ENCODE measurements at regions of chr5 and their contacts with region 1.

Region 1: GRCh38 chr5:43602461-43603343 is at the start of gene NNT:
- DNase-seq: peak; percentile 73 to 86 (median 76)
- H3K4me3 ChIP-seq: peak within 1 kb of the TSS; percentile 97
- H3K4me3 Mint-ChIP-seq: peak within 1 kb of the TSS; percentile 90 to 98 (median 91)
- H3K27ac ChIP-seq: peak within 1 kb of the TSS; percentile 87
- H3K27ac Mint-ChIP-seq: peak within 1 kb of the TSS; percentile 89 to 99 (median 94)
- H3K4me1 ChIP-seq: peaks cover 32% of the 10 kb centered on the region
- H3K4me1 Mint-ChIP-seq: peaks cover 54 to 68% (median 59%) of the 10 kb centered on the region in 3 donors
- H3K27me3 ChIP-seq: no peaks in the 10 kb centered on the region
- H3K27me3 Mint-ChIP-seq: peaks cover 0 to 2% of the 10 kb centered on the region in 2 donors
- total RNA-seq, gene NNT: 79.7 to 87.3 TPM

Region 2: DNA sequence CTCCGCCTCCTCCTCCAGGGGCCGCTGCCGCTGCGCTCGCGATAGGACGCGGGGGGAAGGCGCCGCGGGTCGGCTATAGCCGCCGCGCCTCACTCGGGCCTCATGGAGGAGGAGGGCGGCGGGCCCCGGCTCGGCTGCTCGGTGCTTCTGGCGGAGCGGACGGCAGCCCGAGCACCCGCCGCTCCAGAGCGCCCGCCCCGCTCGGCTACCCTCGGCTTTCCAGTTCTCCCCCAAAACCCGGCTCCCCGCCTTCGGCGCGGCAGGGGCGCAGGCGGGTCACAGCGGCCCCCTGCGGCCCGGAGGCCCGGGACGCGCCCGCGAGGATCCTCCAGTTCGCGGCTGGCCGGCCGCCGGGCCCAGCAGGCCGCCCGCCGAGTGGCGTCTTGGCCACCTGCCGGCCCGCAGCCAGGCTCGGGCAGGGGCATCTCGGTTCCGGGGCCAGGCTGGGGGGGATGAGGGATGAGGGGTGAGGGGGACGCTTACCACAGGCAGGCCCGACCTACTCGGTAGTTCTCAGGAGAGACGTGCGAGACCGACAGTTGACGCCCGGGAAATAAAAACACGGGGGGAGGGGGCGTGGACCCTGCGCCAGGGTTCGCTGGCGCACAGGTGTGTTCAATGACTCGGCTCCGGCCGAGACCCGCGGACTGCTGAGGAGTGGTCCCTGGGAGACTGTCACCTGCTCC is 45.7 kb before region 1 on chr5 and contains the start of gene PAIP1:
- CTCF ChIA-PET with region 1: interaction called, 10 read pairs
- POLR2A ChIA-PET with region 1: interaction called, 9 read pairs
- DNase-seq: peak; percentile 73 to 90 (median 86)
- H3K4me3 ChIP-seq: peak within 1 kb of the TSS; percentile 63
- H3K4me3 Mint-ChIP-seq: peak within 1 kb of the TSS; percentile 91 to 96 (median 95)
- H3K27ac ChIP-seq: peak within 1 kb of the TSS; percentile 81
- H3K27ac Mint-ChIP-seq: peak within 1 kb of the TSS; percentile 97 to 99 (median 98)
- H3K4me1 ChIP-seq: peaks cover 40% of the 10 kb centered on the region
- H3K4me1 Mint-ChIP-seq: peaks cover 10 to 20% (median 12%) of the 10 kb centered on the region in 3 donors
- H3K27me3 ChIP-seq: no peaks in the 10 kb centered on the region
- H3K27me3 Mint-ChIP-seq: peaks cover 1 to 2% of the 10 kb centered on the region in 2 donors
- total RNA-seq, gene PAIP1: 57.2 to 59.3 TPM